Activated CD8-positive, alpha-beta T cell treated with anti-CD3 and anti-CD28 coated beads for 36 hours (primary cell): ENCODE measurements at regions of chr16 and their contacts with region 1.

Region 1: DNA sequence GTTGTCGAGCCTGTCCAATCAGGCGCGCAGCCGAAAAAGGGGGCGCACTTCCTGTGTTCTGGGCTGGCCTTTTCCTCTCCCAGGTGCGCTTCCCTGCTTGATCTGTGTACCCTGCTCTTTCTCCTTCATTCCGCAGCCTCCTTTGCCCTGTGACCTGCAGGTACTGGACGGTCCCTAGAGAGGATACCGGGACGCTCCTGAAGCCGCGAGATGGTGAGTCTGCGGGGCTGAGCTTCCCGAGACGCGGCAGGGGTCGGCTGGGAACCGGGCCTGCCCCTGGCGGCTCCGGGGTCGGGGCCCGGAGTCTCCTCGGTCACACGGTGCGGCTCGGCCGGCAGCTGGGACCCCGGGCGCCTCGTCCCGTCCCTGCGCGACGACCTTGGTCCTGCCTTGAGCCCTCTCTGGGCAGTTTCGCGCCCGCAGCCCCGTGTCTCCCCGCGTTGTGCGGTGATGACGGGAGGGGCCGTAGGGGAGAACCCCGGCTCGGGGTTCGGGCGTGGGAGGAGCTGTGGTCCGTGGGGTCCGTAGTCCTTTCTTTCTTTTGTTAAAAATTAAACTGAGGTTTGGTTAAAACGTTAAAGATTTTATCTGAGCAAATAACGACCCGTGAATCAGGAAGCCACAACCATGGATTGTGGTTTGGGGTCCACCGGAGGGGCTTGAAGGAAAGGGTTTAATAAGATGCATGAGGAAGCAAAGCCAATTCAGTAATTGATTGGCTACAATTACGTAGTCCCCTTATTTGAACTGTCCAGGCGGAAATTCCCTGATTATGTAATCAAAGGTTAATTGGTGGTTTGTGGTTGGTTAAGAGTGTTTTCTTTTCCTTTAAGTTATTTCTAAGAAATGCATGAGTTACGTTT is 172.8 kb upstream of the ZNF267 start:
- DNase-seq: peak; percentile 97
- ATAC-seq: peak; percentile 90
- H3K4me3 Mint-ChIP-seq: peak overlapping the region; percentile 91
- H3K27ac Mint-ChIP-seq: peak overlapping the region; percentile 97
- H3K4me1 Mint-ChIP-seq: peaks cover 25% of the 10 kb centered on the region
- H3K27me3 Mint-ChIP-seq: no peaks in the 10 kb centered on the region
- CTCF ChIP-seq: no peak

Region 2: GRCh38 chr16:31873556-31874365 is 173.0 kb after region 1 on chr16 and contains the start of gene ZNF267:
- CTCF ChIA-PET with region 1: interaction called, 5 read pairs
- POLR2A ChIA-PET with region 1: interaction called, 7 read pairs
- intact Hi-C with region 1: loop called (anchors 5 kb)
- DNase-seq: peak; percentile 98
- ATAC-seq: peak; percentile 67
- H3K4me3 Mint-ChIP-seq: peak within 1 kb of the TSS; percentile 97
- H3K27ac Mint-ChIP-seq: peak within 1 kb of the TSS; percentile 96
- H3K4me1 Mint-ChIP-seq: peaks cover 73% of the 10 kb centered on the region
- H3K27me3 Mint-ChIP-seq: no peaks in the 10 kb centered on the region
- CTCF ChIP-seq: no peak
- total RNA-seq, gene ZNF267: 67.7 to 70.2 TPM